ENCODE measurements at regions of chr22 and their contacts with region 1.

Region 1: DNA sequence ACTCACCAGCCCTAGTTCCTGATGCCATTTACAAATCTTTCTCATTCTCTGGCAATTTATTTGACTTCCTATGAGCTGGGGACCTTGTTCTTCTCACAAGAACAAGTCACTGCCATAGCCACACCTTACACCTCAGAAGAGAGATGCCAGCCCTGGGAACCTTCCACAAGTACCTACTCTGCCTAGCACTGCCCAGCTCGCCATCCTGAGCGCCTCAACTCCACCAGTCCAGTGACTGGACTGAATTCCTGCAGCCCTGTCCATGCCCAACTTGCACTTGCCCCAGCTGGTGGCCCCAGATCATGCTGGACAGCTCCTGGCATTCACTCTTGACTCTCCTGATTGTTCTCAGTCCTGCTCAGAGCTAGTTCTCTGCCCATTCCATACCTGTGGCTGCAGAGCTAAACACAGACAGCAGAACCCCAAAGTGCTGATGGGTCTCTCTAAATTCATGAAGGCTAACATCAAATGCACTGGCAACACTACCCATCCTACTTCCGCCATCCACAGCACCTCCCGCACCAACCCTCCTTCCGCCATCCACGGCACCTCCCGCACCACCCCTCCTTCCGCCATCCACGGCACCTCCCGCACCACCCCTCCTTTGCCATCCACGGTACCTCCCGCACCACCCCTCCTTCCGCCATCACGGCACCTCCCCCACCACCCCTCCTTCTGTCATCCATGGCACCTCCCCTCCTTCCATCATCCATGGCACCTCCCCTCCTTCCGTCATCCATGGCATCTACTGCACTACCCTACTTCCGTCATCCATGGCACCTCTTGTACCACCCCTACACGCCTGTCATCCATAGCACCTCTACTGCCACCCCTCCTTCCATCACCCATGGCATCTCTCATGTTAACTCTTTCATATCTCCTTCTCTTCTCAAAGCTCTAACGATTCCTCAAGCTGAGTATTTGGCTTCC is 23.6 kb upstream of the SLC25A1 start:
- DNase-seq: no peak
- ATAC-seq: no peak
- H3K4me3 Mint-ChIP-seq: no peak overlapping the region
- H3K27ac Mint-ChIP-seq: no peak overlapping the region
- H3K4me1 Mint-ChIP-seq: no peaks in the 10 kb centered on the region
- H3K27me3 Mint-ChIP-seq: no peaks in the 10 kb centered on the region

Region 2: GRCh38 chr22:19260804-19261203 is 58.7 kb after region 1 on chr22:
- CTCF ChIA-PET with region 1: no interaction called
- POLR2A ChIA-PET with region 1: interaction called, 18 read pairs
- intact Hi-C with region 1: no loop called
- DNase-seq: no peak
- ATAC-seq: no peak
- H3K4me3 Mint-ChIP-seq: no peak overlapping the region
- H3K27ac Mint-ChIP-seq: no peak overlapping the region
- H3K4me1 Mint-ChIP-seq: peaks cover 20% of the 10 kb centered on the region
- H3K27me3 Mint-ChIP-seq: no peaks in the 10 kb centered on the region

Measured in activated CD4-positive, alpha-beta T cell treated with anti-CD3 and anti-CD28 coated beads for 36 hours (primary cell).